A673 (cell line): ENCODE measurements at regions of chr4 and their contacts with region 1.

Region 1: GRCh38 chr4:163755013-163755412 is 260.5 kb downstream of the TMA16 start:
- DNase-seq: peak; percentile 81
- H3K4me3 ChIP-seq: no peak overlapping the region
- H3K27ac ChIP-seq: no peak overlapping the region
- H3K4me1 ChIP-seq: peaks cover 11% of the 10 kb centered on the region
- H3K27me3 ChIP-seq: no peaks in the 10 kb centered on the region
- CTCF ChIP-seq: peak; percentile 70

Region 2: DNA sequence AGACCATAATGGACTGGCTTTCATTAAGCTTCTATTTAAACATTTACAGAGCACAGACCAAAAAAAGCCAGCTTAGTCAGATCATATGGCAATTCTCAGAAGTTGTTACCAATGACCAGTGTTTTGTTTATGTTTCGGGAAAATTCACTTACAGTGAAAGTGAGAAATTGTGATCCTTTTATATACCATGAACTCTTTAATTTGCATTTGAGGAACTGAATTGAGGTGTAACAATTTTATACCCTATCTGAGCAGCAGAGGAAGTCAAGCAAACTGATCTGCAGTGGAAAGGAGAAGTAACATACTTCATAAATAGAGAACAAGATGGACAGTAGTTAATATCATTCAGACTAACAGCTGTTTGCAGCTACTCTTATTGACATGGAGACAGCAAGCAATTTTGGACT is 163.4 kb before region 1 on chr4:
- CTCF ChIA-PET with region 1: no interaction called
- POLR2A ChIA-PET with region 1: no interaction called
- intact Hi-C with region 1: no loop called
- DNase-seq: no peak
- H3K4me3 ChIP-seq: no peak overlapping the region
- H3K27ac ChIP-seq: no peak overlapping the region
- H3K4me1 ChIP-seq: peaks cover 11% of the 10 kb centered on the region
- H3K27me3 ChIP-seq: no peaks in the 10 kb centered on the region
- CTCF ChIP-seq: no peak

Region 3: GRCh38 chr4:163681208-163681821 is 73.7 kb before region 1 on chr4:
- CTCF ChIA-PET with region 1: interaction called, 4 read pairs
- POLR2A ChIA-PET with region 1: no interaction called
- intact Hi-C with region 1: loop called (anchors 5 kb)
- DNase-seq: peak; percentile 70
- H3K4me3 ChIP-seq: no peak overlapping the region
- H3K27ac ChIP-seq: no peak overlapping the region
- H3K4me1 ChIP-seq: no peaks in the 10 kb centered on the region
- H3K27me3 ChIP-seq: no peaks in the 10 kb centered on the region
- CTCF ChIP-seq: peak; percentile 69